ENCODE measurements at regions of chr11 and their contacts with region 1.

Region 1: DNA sequence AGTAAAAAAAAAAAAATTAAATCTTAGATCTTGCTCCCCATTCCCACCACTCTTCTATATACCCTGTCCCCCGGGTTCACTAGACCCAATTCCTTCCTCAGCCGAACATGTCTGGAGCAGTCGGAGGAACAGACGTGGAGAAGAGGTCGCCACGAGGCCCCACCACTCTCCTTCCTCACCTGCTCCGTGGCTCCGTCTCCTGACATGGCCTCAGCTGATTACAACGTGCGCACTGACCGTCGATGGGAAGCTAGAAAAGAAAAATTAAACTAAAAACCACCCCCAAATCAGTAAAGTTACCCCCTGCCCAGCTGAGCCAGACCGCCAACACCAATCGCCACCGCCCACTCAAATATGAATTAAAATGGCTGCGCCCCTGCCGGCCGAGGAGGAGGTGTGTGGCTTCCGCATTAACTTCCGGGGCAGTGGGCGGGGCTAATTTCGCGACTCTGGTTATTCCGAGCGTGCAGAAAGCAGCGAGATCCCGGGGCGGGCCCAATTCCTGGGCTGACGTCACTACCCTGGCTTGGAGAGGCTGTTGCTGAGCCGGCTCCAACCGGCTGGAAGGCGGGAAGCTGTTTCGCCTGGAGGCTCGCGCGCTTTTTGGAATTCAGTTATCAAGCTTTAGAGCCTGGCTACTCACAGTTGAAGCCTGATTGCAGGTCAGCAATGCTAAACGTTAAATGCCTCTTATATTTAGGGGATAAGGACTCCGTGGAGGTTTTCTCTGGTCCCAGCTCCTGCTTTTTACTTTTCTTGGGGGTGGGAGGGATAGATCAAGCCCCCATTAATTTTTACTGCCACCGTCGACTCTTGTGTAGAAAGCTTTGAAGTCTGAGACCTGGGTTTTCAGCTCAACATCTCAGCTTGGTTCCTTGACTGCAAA is at the start of gene CSTF3:
- DNase-seq: peak; percentile 99
- H3K4me3 Mint-ChIP-seq: peak within 1 kb of the TSS; percentile 100
- H3K27ac Mint-ChIP-seq: peak within 1 kb of the TSS; percentile 99
- H3K4me1 Mint-ChIP-seq: peaks cover 42% of the 10 kb centered on the region
- H3K27me3 Mint-ChIP-seq: no peaks in the 10 kb centered on the region
- total RNA-seq, gene CSTF3: 26.5 to 27.3 TPM

Region 2: GRCh38 chr11:32090545-32091373 is 1070.6 kb before region 1 on chr11 and contains the start of gene RCN1:
- CTCF ChIA-PET with region 1: no interaction called
- intact Hi-C with region 1: loop called (anchors 5 kb)
- DNase-seq: peak; percentile 43
- H3K4me3 Mint-ChIP-seq: peak within 1 kb of the TSS; percentile 79
- H3K27ac Mint-ChIP-seq: peak within 1 kb of the TSS; percentile 86
- H3K4me1 Mint-ChIP-seq: peaks cover 39% of the 10 kb centered on the region
- H3K27me3 Mint-ChIP-seq: peaks cover 4% of the 10 kb centered on the region
- total RNA-seq, gene RCN1: 24.8 to 29.6 TPM

Region 3: GRCh38 chr11:32960553-32961164 is 200.7 kb before region 1 on chr11:
- CTCF ChIA-PET with region 1: no interaction called
- intact Hi-C with region 1: loop called (anchors 5 kb)
- DNase-seq: no peak
- H3K4me3 Mint-ChIP-seq: no peak overlapping the region
- H3K27ac Mint-ChIP-seq: no peak overlapping the region
- H3K4me1 Mint-ChIP-seq: peaks cover 8% of the 10 kb centered on the region
- H3K27me3 Mint-ChIP-seq: no peaks in the 10 kb centered on the region

Region 4: GRCh38 chr11:32983506-32983905 is 177.9 kb before region 1 on chr11:
- CTCF ChIA-PET with region 1: no interaction called
- intact Hi-C with region 1: no loop called
- DNase-seq: no peak
- H3K4me3 Mint-ChIP-seq: no peak overlapping the region
- H3K27ac Mint-ChIP-seq: no peak overlapping the region
- H3K4me1 Mint-ChIP-seq: no peaks in the 10 kb centered on the region
- H3K27me3 Mint-ChIP-seq: no peaks in the 10 kb centered on the region

Region 5: DNA sequence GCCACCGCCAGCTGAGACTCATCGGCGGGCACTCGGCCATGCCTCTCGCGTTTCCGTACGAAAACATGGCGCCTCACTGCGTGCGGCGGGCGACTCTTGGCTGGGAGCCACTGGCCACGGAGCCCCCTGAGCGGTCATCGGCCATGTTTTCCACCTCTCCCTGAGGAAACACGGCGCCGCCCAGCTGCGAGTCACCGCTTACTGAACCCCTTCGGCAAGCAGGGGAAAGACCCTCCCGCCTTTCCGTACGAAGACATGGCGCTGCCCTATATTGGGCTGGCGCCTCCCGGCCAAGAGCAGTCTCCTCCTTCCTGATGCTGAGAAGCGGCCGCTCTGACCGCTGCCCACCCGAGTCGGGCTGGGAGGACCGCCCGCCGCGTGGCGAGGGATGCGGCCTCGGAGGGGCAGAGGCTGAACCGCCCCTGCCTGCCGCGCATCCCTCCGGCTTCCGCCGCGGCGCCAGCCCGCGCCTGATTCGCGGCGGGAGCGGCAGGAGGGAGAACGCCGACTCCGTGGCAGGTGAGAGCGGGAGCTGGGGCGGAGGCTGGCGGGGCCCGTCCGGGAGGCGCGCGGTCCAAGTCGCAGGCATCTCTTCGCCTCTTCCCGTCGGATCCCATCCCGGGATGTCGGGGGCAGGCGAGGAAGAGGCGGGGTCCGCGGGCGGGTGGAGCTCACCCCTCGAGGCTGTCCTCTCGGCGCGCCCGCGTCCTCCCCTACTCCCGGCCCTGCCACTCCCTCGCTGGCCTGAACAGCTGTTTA is 121.9 kb before region 1 on chr11 and contains the start of gene TCP11L1:
- CTCF ChIA-PET with region 1: no interaction called
- intact Hi-C with region 1: loop called (anchors 1 kb)
- DNase-seq: peak; percentile 88
- H3K4me3 Mint-ChIP-seq: peak within 1 kb of the TSS; percentile 85
- H3K27ac Mint-ChIP-seq: peak within 1 kb of the TSS; percentile 92
- H3K4me1 Mint-ChIP-seq: peaks cover 25% of the 10 kb centered on the region
- H3K27me3 Mint-ChIP-seq: no peaks in the 10 kb centered on the region
- total RNA-seq, gene TCP11L1: 4.8 to 5.7 TPM

Region 6: DNA sequence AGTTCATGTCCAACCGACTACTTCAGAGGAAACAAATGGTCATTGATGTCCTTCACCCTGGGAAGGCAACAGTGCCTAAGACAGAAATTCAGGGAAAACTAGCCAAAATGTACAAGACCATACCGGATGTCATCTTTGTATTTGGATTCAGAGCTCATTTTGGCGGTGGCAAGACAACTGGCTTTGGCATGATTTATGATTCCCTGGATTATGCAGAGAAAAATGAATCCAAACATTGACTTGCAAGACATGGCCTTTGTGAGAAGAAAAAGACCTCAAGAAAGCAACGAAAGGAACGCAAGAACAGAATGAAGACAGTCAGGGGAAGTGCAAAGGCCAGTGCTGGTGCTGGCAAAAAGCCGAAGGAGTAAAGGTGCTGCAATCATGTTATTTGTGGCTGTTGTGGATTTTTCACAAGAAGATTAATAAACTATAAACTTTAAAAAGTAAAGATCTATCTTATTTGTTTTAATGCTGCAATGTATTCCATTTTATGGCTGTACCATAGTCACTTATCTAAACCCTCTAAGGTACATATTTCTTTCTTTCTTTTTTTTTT is 75.8 kb after region 1 on chr11:
- CTCF ChIA-PET with region 1: no interaction called
- intact Hi-C with region 1: no loop called
- DNase-seq: no peak
- H3K4me3 Mint-ChIP-seq: no peak overlapping the region
- H3K27ac Mint-ChIP-seq: no peak overlapping the region
- H3K4me1 Mint-ChIP-seq: no peaks in the 10 kb centered on the region
- H3K27me3 Mint-ChIP-seq: no peaks in the 10 kb centered on the region

Region 7: DNA sequence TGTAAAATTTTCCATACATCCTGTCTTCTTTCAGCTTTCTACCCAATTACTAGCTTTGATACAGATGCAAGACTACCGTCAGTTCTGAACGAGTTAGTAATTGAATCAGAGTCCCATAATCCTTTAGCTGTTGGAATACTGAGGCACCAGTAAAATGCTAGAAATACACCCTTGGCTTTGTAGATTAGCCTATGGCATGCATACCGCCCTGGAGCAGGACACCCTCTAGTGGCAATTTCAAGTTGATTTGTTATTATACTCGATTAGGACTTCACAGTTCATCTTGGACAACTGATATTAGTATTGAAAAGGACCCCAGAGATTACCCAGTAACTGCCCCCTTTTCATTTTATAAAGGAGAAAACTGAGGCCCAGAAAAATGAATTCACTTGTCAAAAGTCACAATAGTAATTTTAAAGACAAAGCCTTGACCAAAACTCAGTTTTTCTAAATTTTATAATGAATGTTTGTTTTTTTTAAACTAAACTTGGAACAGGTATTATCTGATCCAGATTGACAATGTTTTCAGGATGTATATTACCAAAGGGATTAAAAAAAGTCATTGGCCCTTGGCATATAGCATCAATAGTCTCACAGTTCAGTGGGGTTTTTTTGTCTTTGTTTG is 168.5 kb after region 1 on chr11:
- CTCF ChIA-PET with region 1: interaction called, 9 read pairs
- intact Hi-C with region 1: loop called (anchors 1 kb)
- DNase-seq: peak; percentile 66
- H3K4me3 Mint-ChIP-seq: no peak overlapping the region
- H3K27ac Mint-ChIP-seq: no peak overlapping the region
- H3K4me1 Mint-ChIP-seq: peaks cover 13% of the 10 kb centered on the region
- H3K27me3 Mint-ChIP-seq: no peaks in the 10 kb centered on the region

Region 8: DNA sequence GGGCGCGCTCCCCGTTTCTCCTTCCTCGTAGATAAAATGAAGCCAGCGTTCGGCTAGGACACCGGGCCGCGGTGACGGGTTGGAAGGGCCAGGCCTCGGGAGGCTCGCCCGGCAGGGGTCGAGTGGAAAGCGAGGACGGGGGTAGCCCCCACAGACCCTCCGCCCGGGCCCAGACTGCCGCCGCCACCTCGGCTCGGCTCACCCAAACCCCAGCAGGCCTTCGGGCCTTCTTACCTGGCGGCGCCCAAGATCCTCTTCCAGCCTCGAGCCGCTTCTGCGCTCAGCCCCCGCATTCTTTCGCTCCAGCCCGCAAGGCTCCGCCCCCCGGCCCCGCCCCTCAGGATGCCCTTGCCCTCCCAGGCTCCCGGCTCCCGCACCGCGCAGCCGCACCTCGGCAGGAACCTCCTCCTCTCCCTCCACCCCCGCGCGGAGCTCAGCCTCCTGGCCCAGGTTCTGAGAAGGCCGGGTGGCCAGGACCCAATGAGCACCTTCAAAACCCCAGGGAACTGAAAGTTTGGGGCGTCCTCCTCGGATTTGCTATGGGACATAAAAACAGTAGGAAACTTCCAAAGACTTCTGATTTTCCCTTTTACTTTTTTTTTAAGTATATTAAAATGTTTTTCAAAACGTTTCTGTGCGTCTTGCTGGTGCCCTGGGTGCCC is 574.9 kb after region 1 on chr11 and contains the start of gene CD59:
- CTCF ChIA-PET with region 1: no interaction called
- intact Hi-C with region 1: loop called (anchors 5 kb)
- DNase-seq: peak; percentile 95
- H3K4me3 Mint-ChIP-seq: peak within 1 kb of the TSS; percentile 78
- H3K27ac Mint-ChIP-seq: peak within 1 kb of the TSS; percentile 61
- H3K4me1 Mint-ChIP-seq: peaks cover 33% of the 10 kb centered on the region
- H3K27me3 Mint-ChIP-seq: no peaks in the 10 kb centered on the region
- total RNA-seq, gene CD59: 59.9 to 61.9 TPM

Region 9: GRCh38 chr11:33829433-33830141 is 668.2 kb after region 1 on chr11:
- CTCF ChIA-PET with region 1: no interaction called
- intact Hi-C with region 1: loop called (anchors 10 kb)
- DNase-seq: peak; percentile 85
- H3K4me3 Mint-ChIP-seq: peak overlapping the region; percentile 57
- H3K27ac Mint-ChIP-seq: no peak overlapping the region
- H3K4me1 Mint-ChIP-seq: peaks cover 2% of the 10 kb centered on the region
- H3K27me3 Mint-ChIP-seq: peaks cover 42% of the 10 kb centered on the region

Measured in activated naive CD4-positive, alpha-beta T cell treated with anti-CD3 and anti-CD28 coated beads for 36 hours (primary cell).